ENCODE measurements at regions of chr14 and their contacts with region 1.

Region 1: GRCh38 chr14:22929104-22929847 is at the start of gene PRMT5:
- DNase-seq: peak; percentile 96
- H3K4me3 Mint-ChIP-seq: no peak within 1 kb of the TSS
- H3K27ac Mint-ChIP-seq: no peak within 1 kb of the TSS
- H3K4me1 Mint-ChIP-seq: peaks cover 27% of the 10 kb centered on the region
- H3K27me3 Mint-ChIP-seq: no peaks in the 10 kb centered on the region
- total RNA-seq, gene PRMT5: 147 and 152 TPM in 2 replicates

Region 2: GRCh38 chr14:22589096-22589839 is 340.0 kb before region 1 on chr14 and contains the start of gene DAD1:
- intact Hi-C with region 1: loop called (anchors 2 kb)
- DNase-seq: peak; percentile 100
- H3K4me3 Mint-ChIP-seq: peak within 1 kb of the TSS; percentile 88
- H3K27ac Mint-ChIP-seq: peak within 1 kb of the TSS; percentile 95
- H3K4me1 Mint-ChIP-seq: peaks cover 51% of the 10 kb centered on the region
- H3K27me3 Mint-ChIP-seq: peaks cover 10% of the 10 kb centered on the region
- total RNA-seq, gene DAD1: 246 and 256 TPM in 2 replicates

Region 3: GRCh38 chr14:22955702-22956569 is 26.7 kb after region 1 on chr14:
- intact Hi-C with region 1: loop called (anchors 1 kb)
- DNase-seq: no peak
- H3K4me3 Mint-ChIP-seq: peak overlapping the region; percentile 87
- H3K27ac Mint-ChIP-seq: peak overlapping the region; percentile 79
- H3K4me1 Mint-ChIP-seq: peaks cover 16% of the 10 kb centered on the region
- H3K27me3 Mint-ChIP-seq: peaks cover 1% of the 10 kb centered on the region

Region 4: DNA sequence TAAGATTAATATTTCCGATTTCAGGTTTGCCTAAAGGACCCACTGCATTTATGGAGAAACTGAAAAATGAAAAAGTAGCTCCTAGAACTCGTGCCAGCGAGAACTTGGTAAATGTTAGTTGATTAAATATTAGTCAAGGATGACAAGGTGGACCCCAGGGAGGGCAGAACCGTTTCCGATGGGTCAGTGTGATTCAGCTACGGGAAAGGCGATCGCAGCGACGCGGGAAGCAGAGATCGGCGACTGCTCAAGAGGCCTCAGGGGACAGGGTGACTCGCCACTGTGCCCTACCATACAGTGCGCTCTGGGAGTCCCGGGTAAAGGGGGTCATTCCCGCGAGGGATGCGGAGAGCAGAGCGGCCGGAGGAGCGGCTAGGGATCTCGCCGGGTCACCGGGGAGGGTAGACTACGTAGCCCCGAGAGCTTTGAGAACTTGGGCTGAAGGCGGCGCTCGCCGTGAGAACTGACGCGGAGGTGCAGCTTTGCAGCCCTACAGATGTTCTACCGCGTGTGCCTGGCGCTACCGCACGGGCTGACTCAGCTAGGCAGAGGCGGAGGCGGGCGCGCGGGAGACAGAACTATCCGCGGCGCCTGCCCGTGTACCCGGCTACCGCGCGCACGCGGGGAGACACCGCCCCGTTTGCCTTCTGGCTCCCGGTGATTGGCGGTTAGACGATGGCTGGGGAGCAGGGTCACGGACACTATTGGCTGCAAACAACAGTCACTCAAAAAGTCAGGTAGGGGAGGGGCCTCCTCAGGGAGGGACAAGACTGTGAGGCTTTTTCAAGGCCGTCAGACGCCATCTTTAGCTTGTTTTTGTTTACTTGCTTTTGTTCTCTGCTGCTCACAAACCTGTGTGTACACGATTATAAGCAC is 77.5 kb after region 1 on chr14:
- intact Hi-C with region 1: loop called (anchors 2 kb)
- DNase-seq: peak; percentile 98
- H3K4me3 Mint-ChIP-seq: peak overlapping the region; percentile 92
- H3K27ac Mint-ChIP-seq: peak overlapping the region; percentile 98
- H3K4me1 Mint-ChIP-seq: peaks cover 38% of the 10 kb centered on the region
- H3K27me3 Mint-ChIP-seq: no peaks in the 10 kb centered on the region

Region 5: GRCh38 chr14:23320774-23321571 is 391.7 kb after region 1 on chr14 and contains the start of gene PABPN1:
- intact Hi-C with region 1: loop called (anchors 5 kb)
- DNase-seq: peak; percentile 98
- H3K4me3 Mint-ChIP-seq: peak within 1 kb of the TSS; percentile 88
- H3K27ac Mint-ChIP-seq: peak within 1 kb of the TSS; percentile 86
- H3K4me1 Mint-ChIP-seq: peaks cover 23% of the 10 kb centered on the region
- H3K27me3 Mint-ChIP-seq: no peaks in the 10 kb centered on the region
- total RNA-seq, gene PABPN1: 241 and 259 TPM in 2 replicates

Measured in activated T-helper 2 cell treated with anti-CD3 and anti-CD28 coated beads, Interferon-gamma antibody, Interleukin-2, Interleukin-4, amounts not matched to agents 10 μg/mL and 5 μg/mL and 100 μg/mL, durations not matched to agents 14 hours and 24 hours and 36 hours (primary cell).